Activated CD4-positive, alpha-beta memory T cell treated with anti-CD3 and anti-CD28 coated beads, Interleukin-2, amount 10 ng/mL, durations not matched to agents 7 days and 5 days (primary cell): ENCODE measurements at regions of chr17 and their contacts with region 1.

Region 1: DNA sequence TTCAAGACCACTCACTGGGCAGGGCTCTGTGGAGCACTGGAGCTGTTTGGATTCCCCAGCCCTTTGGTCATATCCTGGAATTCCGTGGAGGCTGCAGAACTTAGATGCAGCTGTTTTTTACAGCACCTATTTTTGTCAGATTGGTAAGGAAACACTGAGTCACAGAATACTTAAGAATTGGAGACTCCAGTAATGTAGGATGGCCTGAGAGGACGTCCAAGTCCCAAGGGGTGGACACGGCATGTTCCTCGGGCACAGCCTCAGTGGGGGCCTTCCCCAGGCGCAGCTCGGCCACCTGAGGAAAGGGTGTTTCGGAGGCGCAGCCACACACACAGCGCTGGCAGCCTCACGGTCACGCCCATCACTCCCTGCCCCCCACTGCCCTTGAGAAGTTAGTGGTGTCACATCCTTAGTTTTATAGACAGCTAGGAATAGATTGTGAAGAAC is 14.8 kb downstream of the PLD6 start:
- DNase-seq: no peak
- H3K4me3 Mint-ChIP-seq: no peak overlapping the region
- H3K27ac Mint-ChIP-seq: no peak overlapping the region
- H3K4me1 Mint-ChIP-seq: peaks cover 15% of the 10 kb centered on the region
- H3K27me3 Mint-ChIP-seq: no peaks in the 10 kb centered on the region

Region 2: GRCh38 chr17:17119533-17119932 is 71.8 kb before region 1 on chr17:
- CTCF ChIA-PET with region 1: no interaction called
- POLR2A ChIA-PET with region 1: no interaction called
- DNase-seq: peak; percentile 78
- H3K4me3 Mint-ChIP-seq: no peak overlapping the region
- H3K27ac Mint-ChIP-seq: peak overlapping the region; percentile 93
- H3K4me1 Mint-ChIP-seq: peaks cover 77% of the 10 kb centered on the region
- H3K27me3 Mint-ChIP-seq: no peaks in the 10 kb centered on the region

Region 3: GRCh38 chr17:17132746-17133145 is 58.6 kb before region 1 on chr17:
- CTCF ChIA-PET with region 1: no interaction called
- POLR2A ChIA-PET with region 1: no interaction called
- DNase-seq: no peak
- H3K4me3 Mint-ChIP-seq: no peak overlapping the region
- H3K27ac Mint-ChIP-seq: no peak overlapping the region
- H3K4me1 Mint-ChIP-seq: no peaks in the 10 kb centered on the region
- H3K27me3 Mint-ChIP-seq: no peaks in the 10 kb centered on the region

Region 4: GRCh38 chr17:17206124-17206912 is 14.9 kb after region 1 on chr17 and contains the start of gene PLD6:
- CTCF ChIA-PET with region 1: interaction called, 3 read pairs
- POLR2A ChIA-PET with region 1: interaction called, 49 read pairs
- DNase-seq: peak; percentile 90
- H3K4me3 Mint-ChIP-seq: peak within 1 kb of the TSS; percentile 83
- H3K27ac Mint-ChIP-seq: peak within 1 kb of the TSS; percentile 73
- H3K4me1 Mint-ChIP-seq: peaks cover 31% of the 10 kb centered on the region
- H3K27me3 Mint-ChIP-seq: no peaks in the 10 kb centered on the region
- total RNA-seq, gene PLD6: 6.3 to 6.6 TPM